Naive thymus-derived CD4-positive, alpha-beta T cell (primary cell): ENCODE measurements at regions of chr10 and their contacts with region 1.

Region 1: DNA sequence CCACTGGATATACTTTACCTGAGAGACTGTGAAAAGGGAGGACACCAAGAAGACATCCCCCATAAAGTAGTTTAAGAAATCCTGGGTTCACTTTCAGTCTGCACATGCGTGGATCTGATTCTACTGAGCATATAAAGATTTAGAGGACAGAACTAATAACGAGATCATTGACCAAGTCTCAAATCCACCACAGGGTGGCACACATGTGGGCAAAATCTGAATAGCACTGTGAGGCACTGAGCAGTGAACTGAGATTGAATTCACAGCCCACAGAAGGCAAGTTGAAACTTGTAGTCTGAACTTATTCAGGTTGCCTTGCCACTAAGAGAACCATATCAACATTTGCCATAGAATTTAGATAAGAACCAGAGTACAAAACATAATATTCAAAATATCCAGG is 818.6 kb downstream of the GRID1 start:
- DNase-seq: peak in 6 of 9 donors; percentile 20 to 40 (median 34)
- ATAC-seq: peak; percentile 36
- H3K4me3 ChIP-seq: no peak overlapping the region
- H3K4me3 Mint-ChIP-seq: no peak overlapping the region
- H3K27ac ChIP-seq: no peak overlapping the region
- H3K27ac Mint-ChIP-seq: no peak overlapping the region
- H3K4me1 ChIP-seq: no peaks in the 10 kb centered on the region
- H3K4me1 Mint-ChIP-seq: peaks cover 0 to 4% (median 0%) of the 10 kb centered on the region in 7 donors
- H3K27me3 ChIP-seq: no peaks in the 10 kb centered on the region
- H3K27me3 Mint-ChIP-seq: peaks cover 10 to 30% (median 24%) of the 10 kb centered on the region in 5 donors

Region 2: GRCh38 chr10:85612833-85613232 is 64.8 kb after region 1 on chr10:
- CTCF ChIA-PET with region 1: no interaction called
- POLR2A ChIA-PET with region 1: no interaction called
- intact Hi-C with region 1: loop called (anchors 2 to 5 kb)
- DNase-seq: peak in 4 of 9 donors; percentile 19 to 35 (median 24)
- ATAC-seq: peak; percentile 56
- H3K4me3 ChIP-seq: peak overlapping the region; percentile 44
- H3K4me3 Mint-ChIP-seq: peak overlapping the region; percentile 69 to 88 (median 78)
- H3K27ac ChIP-seq: no peak overlapping the region
- H3K27ac Mint-ChIP-seq: peak overlapping the region; percentile 54 to 94 (median 83)
- H3K4me1 ChIP-seq: peaks cover 36 to 44% of the 10 kb centered on the region in 2 donors
- H3K4me1 Mint-ChIP-seq: peaks cover 30 to 81% (median 71%) of the 10 kb centered on the region in 7 donors
- H3K27me3 ChIP-seq: no peaks in the 10 kb centered on the region
- H3K27me3 Mint-ChIP-seq: peaks cover 0 to 34% (median 0%) of the 10 kb centered on the region in 5 donors

Region 3: DNA sequence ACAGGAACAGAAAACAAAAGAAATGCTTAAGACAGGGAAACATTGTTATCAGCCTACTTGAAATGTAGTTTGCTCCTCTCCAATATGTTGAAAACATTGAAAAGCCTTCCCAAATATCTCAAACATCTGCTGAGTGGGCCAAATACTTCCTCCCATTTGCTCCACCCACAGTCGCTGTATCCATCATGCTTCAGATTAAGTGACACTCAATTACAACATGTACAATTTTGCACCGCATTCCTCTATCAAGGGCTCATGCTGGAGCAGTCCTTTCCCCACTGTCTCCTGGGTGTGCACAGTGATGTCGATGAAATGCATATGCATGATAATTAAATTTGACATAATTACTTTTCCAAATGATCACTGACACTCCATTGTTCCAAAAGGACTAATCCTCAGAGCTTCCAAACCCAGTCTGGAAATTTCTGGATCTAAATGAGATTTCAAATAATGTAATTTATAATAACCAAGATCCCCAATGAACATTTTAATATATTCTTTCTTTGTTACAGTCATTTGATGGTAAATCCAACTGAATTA is 213.9 kb after region 1 on chr10:
- CTCF ChIA-PET with region 1: no interaction called
- POLR2A ChIA-PET with region 1: no interaction called
- intact Hi-C with region 1: loop called in 1 of 2 experiments (anchors 10 kb)
- DNase-seq: no peak
- ATAC-seq: no peak
- H3K4me3 ChIP-seq: no peak overlapping the region
- H3K4me3 Mint-ChIP-seq: no peak overlapping the region
- H3K27ac ChIP-seq: no peak overlapping the region
- H3K27ac Mint-ChIP-seq: no peak overlapping the region
- H3K4me1 ChIP-seq: no peaks in the 10 kb centered on the region
- H3K4me1 Mint-ChIP-seq: no peaks in the 10 kb centered on the region
- H3K27me3 ChIP-seq: no peaks in the 10 kb centered on the region
- H3K27me3 Mint-ChIP-seq: peaks cover 0 to 11% (median 2%) of the 10 kb centered on the region in 5 donors

Region 4: GRCh38 chr10:85786401-85786899 is 238.4 kb after region 1 on chr10:
- CTCF ChIA-PET with region 1: no interaction called
- POLR2A ChIA-PET with region 1: no interaction called
- intact Hi-C with region 1: loop called in 1 of 2 experiments (anchors 10 kb)
- DNase-seq: no peak
- ATAC-seq: no peak
- H3K4me3 ChIP-seq: no peak overlapping the region
- H3K4me3 Mint-ChIP-seq: no peak overlapping the region
- H3K27ac ChIP-seq: no peak overlapping the region
- H3K27ac Mint-ChIP-seq: no peak overlapping the region
- H3K4me1 ChIP-seq: no peaks in the 10 kb centered on the region
- H3K4me1 Mint-ChIP-seq: no peaks in the 10 kb centered on the region
- H3K27me3 ChIP-seq: no peaks in the 10 kb centered on the region
- H3K27me3 Mint-ChIP-seq: peaks cover 0 to 6% (median 0%) of the 10 kb centered on the region in 5 donors

Region 5: DNA sequence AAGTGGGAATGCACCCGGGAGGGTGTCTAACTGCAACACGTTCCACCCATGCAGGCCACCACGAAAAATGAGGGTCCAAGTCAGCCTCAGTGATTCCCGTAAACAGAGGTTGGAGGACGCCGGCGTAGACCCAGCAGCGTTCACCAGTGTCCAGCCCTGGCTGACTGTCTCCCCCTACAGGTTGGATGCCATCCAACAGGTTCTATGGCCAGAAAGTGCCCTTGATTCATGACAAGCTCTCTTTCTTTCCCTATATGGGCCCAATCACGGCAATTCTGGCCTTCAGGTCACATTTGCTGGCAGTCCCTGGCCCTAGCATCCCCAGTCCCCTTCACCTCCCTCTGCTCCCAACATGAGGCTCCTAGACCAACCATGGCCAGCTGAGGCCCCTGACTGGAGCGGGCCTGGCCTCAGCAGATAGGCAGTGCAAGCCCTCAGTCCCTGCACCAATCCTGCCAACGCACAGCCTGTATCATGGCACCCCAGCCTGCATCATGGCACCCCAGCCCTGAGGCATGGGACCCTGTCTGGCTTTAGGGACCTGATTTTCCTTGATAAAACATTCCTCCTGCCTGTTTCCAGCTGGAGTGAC is 591.1 kb after region 1 on chr10:
- CTCF ChIA-PET with region 1: no interaction called
- POLR2A ChIA-PET with region 1: no interaction called
- intact Hi-C with region 1: loop called in 1 of 2 experiments (anchors 10 kb)
- DNase-seq: no peak
- ATAC-seq: no peak
- H3K4me3 ChIP-seq: no peak overlapping the region
- H3K4me3 Mint-ChIP-seq: no peak overlapping the region
- H3K27ac ChIP-seq: no peak overlapping the region
- H3K27ac Mint-ChIP-seq: peak overlapping the region in 1 of 9 donors; percentile 33
- H3K4me1 ChIP-seq: no peaks in the 10 kb centered on the region
- H3K4me1 Mint-ChIP-seq: no peaks in the 10 kb centered on the region
- H3K27me3 ChIP-seq: no peaks in the 10 kb centered on the region
- H3K27me3 Mint-ChIP-seq: peaks cover 0 to 7% (median 0%) of the 10 kb centered on the region in 5 donors